ENCODE measurements at regions of chr1 and their contacts with region 1.

Region 1: DNA sequence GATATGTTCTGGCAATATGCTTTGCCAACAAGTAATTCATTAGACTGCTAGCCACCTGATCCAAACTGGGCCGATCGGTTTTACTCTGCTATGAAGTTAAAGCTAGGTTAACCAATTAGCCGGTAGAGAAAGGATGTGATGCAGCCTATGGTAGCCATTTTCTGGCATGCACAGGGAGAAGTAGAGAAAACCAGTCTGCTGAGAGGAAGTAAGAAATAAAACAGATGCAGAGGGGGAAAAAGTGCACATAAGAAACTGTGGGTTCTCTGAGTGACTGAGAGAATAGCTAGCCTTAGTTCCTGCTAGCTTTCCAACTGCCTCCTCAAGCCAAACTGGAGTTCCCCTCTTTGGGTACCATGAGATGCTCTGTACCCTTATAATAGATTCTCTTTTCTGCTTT is 52.8 kb downstream of the ARID4B start:
- DNase-seq: peak in 1 of 5 donors; percentile 39
- H3K4me3 ChIP-seq: no peak overlapping the region
- H3K4me3 Mint-ChIP-seq: peak overlapping the region; percentile 4 to 63 (median 19)
- H3K27ac ChIP-seq: peak overlapping the region; percentile 3
- H3K27ac Mint-ChIP-seq: peak overlapping the region; percentile 9 to 82 (median 37)
- H3K4me1 ChIP-seq: peaks cover 84% of the 10 kb centered on the region
- H3K4me1 Mint-ChIP-seq: peaks cover 53 to 88% (median 70%) of the 10 kb centered on the region in 4 donors
- H3K27me3 ChIP-seq: no peaks in the 10 kb centered on the region
- H3K27me3 Mint-ChIP-seq: no peaks in the 10 kb centered on the region

Region 2: DNA sequence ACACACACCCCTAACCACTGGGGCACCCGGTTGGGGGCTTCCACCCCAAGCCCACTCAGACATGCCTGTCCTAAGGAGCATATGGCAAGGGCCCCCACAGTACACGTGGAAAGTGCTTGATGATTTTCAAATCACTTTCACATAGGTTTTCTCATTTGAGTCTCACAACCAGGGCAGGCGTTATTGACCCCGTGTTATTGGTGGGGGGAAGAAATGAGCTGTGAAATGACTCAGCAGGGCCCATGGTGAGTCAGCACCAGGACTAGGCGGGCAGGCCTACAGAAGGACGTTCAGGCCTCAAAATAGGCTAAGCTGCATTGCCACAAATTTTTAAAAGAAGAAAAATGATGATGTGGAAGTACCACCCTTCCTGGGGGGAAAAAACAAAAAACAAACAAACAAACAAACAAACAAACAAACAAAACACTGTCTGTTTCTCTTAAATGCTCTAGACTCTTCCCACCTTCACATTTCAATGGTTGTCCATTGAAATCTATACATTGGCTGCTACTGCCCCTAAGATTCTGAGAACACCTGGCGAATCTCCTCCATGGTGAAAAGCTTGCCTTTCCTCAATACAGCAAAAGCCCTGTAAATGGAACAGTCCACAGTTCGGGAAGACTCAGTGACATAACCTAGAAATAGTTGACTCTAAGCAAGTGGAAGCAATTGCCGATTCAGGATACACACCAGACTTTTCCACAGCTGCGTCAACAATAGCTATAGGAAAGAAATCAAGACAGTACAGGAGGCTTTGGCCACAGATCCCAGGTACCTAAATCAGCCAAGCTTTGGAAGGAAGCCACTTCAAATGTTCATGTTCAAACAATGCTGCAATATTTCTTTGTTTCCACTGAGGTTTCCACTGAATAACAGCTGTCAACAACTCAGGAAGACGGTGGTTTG is 381.2 kb before region 1 on chr1:
- CTCF ChIA-PET with region 1: no interaction called
- POLR2A ChIA-PET with region 1: no interaction called
- intact Hi-C with region 1: no loop called
- DNase-seq: no peak
- H3K4me3 ChIP-seq: no peak overlapping the region
- H3K4me3 Mint-ChIP-seq: peak overlapping the region in 2 of 8 donors; percentile 9 to 20
- H3K27ac ChIP-seq: no peak overlapping the region
- H3K27ac Mint-ChIP-seq: peak overlapping the region in 3 of 7 donors; percentile 13 to 77 (median 74)
- H3K4me1 ChIP-seq: peaks cover 12% of the 10 kb centered on the region
- H3K4me1 Mint-ChIP-seq: peaks cover 9 to 28% (median 19%) of the 10 kb centered on the region in 4 donors
- H3K27me3 ChIP-seq: no peaks in the 10 kb centered on the region
- H3K27me3 Mint-ChIP-seq: no peaks in the 10 kb centered on the region

Region 3: GRCh38 chr1:235259133-235259778 is 16.0 kb before region 1 on chr1:
- CTCF ChIA-PET with region 1: interaction called, 6 read pairs
- POLR2A ChIA-PET with region 1: interaction called, 3 read pairs
- intact Hi-C with region 1: loop called (anchors 2 kb)
- DNase-seq: peak in 2 of 5 donors; percentile 7 to 10
- H3K4me3 ChIP-seq: no peak overlapping the region
- H3K4me3 Mint-ChIP-seq: peak overlapping the region in 7 of 8 donors; percentile 10 to 74 (median 48)
- H3K27ac ChIP-seq: peak overlapping the region; percentile 26
- H3K27ac Mint-ChIP-seq: peak overlapping the region in 6 of 7 donors; percentile 27 to 81 (median 60)
- H3K4me1 ChIP-seq: peaks cover 76% of the 10 kb centered on the region
- H3K4me1 Mint-ChIP-seq: peaks cover 47 to 90% (median 58%) of the 10 kb centered on the region in 4 donors
- H3K27me3 ChIP-seq: no peaks in the 10 kb centered on the region
- H3K27me3 Mint-ChIP-seq: no peaks in the 10 kb centered on the region

Region 4: DNA sequence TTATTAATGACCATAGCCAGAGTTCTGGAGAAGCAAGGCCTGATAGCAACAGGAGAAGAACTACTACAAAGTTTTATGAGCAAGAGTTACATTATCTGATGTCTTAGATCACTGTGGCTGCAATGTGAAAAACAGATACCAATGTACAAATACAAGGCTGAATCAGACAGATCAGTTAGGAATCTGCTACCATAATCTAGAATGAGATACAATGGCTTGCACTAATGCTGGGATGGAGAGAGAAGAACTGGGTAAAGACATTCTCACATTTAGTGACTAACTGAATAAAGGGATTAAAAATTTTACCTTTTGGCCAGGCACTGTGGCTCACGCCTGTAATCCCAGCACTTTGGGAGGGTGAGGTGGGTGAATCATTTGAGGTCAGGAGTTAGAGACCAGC is 11.4 kb after region 1 on chr1:
- CTCF ChIA-PET with region 1: no interaction called
- POLR2A ChIA-PET with region 1: interaction called, 4 read pairs
- intact Hi-C with region 1: loop called (anchors 2 kb)
- DNase-seq: no peak
- H3K4me3 ChIP-seq: no peak overlapping the region
- H3K4me3 Mint-ChIP-seq: peak overlapping the region in 6 of 8 donors; percentile 11 to 57 (median 34)
- H3K27ac ChIP-seq: no peak overlapping the region
- H3K27ac Mint-ChIP-seq: peak overlapping the region in 4 of 7 donors; percentile 8 to 88 (median 34)
- H3K4me1 ChIP-seq: peaks cover 87% of the 10 kb centered on the region
- H3K4me1 Mint-ChIP-seq: peaks cover 49 to 86% (median 68%) of the 10 kb centered on the region in 4 donors
- H3K27me3 ChIP-seq: no peaks in the 10 kb centered on the region
- H3K27me3 Mint-ChIP-seq: no peaks in the 10 kb centered on the region

Measured in CD4-positive, alpha-beta memory T cell (primary cell).